Common myeloid progenitor, CD34-positive (primary cell): ENCODE measurements at regions of chr2 and their contacts with region 1.

Region 1: GRCh38 chr2:25309402-25309801 is 32.3 kb downstream of the DNMT3A start:
- DNase-seq: peak; percentile 77 to 90 (median 88)
- H3K4me3 ChIP-seq: no peak overlapping the region
- H3K27ac ChIP-seq: no peak overlapping the region
- H3K4me1 ChIP-seq: peaks cover 0 to 15% (median 7%) of the 10 kb centered on the region in 4 experiments
- H3K27me3 ChIP-seq: no peaks in the 10 kb centered on the region

Region 2: DNA sequence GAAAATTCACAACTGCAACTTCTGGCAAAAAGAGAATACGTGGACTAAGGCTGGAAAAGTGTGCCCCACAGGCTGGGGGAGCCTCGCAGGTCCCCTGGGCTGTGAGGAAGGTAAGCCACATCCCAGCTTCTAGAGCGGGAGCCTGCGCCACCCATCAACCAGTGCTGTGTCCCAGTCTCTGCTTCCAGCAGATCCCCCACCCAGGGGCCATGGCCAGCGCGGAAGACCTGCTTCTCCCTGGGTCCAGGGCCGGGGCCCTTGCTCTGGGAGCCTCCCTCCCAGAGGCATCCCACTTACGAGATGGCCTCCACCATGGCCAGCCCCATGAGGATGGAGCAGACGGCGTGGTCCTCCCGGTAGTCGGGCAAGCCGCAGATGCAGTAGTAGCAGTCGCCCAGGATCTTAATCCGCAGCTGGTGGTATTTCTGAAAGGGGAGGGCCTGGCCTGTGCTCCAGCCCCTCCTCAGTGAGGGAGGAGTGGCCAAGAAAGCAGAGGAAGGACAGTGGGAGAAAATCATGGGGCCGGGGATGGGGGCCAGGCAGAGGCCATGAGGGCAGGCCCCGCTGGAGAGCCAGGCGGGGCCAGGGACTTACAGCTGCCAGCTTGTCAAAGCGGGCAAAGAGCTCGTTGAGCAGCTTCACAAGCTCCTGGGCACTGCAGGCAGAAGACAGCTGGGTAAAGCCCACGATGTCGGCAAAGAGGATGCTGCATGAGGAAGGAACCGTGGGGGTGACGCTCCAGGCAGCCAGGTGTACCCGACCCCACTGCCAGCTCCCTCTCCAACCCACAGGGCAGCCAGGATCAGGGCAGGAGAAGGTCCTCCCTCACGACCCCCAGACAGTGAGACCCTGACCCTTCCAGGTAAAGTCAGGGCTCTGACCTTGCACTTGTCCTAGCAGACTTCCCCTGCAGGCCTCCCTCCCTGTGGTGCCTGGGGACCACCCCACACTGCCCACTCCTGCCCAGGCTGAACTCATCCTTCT is 468.1 kb before region 1 on chr2:
- CTCF ChIA-PET with region 1: no interaction called
- POLR2A ChIA-PET with region 1: no interaction called
- DNase-seq: no peak
- H3K4me3 ChIP-seq: no peak overlapping the region
- H3K27ac ChIP-seq: no peak overlapping the region
- H3K4me1 ChIP-seq: no peaks in the 10 kb centered on the region
- H3K27me3 ChIP-seq: no peaks in the 10 kb centered on the region

Region 3: DNA sequence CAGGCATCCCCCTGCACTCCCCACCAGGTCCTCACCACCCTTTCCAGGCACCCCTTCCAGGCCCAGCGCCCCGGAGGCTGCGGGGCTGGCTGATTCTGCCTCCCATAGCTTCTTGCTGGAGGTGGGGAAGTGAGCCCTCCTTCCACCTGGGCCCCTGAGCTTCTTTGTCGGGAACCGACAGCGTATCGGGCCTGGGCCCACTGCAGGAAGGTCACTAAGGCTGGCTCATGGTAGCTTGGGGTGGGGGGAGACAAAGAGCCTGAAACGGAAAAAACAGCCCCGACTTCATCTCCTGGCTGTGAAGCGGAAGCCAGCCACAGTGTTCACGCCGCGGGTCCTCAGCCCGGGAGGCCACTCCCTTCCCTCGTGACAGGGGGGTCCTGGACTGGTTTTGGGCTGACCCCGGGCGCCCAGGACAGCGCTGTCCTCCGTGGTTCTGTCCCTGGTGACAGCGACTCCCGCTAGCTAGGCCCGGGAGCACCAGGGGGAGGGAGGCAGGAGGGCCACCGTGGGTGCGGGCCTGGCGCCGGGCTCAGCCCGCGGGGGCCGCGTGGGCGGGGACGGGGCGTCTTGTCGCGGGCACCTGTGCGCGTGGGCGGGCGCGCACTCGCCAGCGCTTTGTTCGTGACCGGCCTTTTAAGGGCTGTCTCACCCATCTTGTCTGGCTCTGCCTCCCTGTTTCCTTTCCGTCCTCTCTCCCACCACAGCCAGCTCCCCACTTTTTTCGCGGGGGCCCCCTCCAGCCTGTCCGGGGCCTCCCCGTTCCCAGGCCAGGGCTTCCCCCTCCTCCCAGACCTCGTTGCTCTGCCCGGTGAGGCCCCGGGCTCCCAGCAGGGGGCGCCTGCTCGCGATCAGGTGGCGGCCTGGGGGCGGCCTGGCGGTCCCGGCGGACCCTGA is 32.6 kb before region 1 on chr2:
- CTCF ChIA-PET with region 1: interaction called, 41 read pairs
- POLR2A ChIA-PET with region 1: no interaction called
- DNase-seq: peak; percentile 71 to 86 (median 82)
- H3K4me3 ChIP-seq: peak overlapping the region in 5 of 7 experiments; percentile 6 to 58 (median 56)
- H3K27ac ChIP-seq: peak overlapping the region; percentile 75 to 83
- H3K4me1 ChIP-seq: peaks cover 22 to 79% (median 75%) of the 10 kb centered on the region in 4 experiments
- H3K27me3 ChIP-seq: no peaks in the 10 kb centered on the region

Region 4: DNA sequence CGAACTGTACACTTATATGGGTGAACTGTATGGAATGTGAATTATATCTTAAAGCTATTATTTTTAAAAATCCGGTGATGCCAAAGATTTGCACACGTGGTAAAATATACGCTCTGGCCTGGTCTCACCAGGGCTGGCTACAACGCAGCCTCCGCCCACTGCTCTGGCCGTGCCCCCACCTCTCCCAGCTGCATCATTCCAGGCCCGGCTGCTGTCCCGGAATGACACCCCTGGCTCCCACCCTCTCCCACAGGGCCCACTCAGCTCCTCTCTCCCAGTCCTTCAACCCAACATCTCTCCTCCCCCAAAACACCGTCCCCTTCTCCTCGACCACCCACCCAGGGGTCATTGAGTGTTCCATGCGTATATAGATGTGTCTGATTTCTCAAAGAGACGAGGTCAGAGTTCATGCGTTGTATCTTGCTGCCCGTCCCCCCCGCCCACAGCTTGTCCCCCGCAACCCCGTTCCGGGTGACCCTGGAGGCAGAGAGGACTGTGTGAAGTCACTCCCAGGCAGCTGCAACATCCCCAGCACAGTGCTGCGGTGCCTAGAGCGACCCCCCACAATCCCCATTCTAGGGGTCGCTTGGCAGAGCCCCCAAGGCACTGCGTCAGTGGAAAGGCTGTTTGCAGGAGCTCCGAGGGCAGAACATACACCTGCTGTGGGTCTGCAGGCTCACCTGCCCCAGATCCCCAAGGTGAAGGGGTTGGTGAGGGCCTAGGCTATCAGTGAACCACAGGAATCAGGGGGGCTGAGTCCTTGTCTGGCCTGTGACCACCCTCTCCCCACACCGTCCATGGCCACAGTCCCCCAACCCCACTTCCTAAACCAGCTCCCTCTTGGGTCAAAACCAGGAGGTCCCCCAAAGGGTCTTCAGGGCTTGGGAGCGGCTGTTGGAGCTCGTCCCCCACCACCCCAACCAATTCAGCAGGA is 19.0 kb after region 1 on chr2:
- CTCF ChIA-PET with region 1: interaction called, 12 read pairs
- POLR2A ChIA-PET with region 1: no interaction called
- DNase-seq: no peak
- H3K4me3 ChIP-seq: no peak overlapping the region
- H3K27ac ChIP-seq: no peak overlapping the region
- H3K4me1 ChIP-seq: no peaks in the 10 kb centered on the region
- H3K27me3 ChIP-seq: no peaks in the 10 kb centered on the region

Region 5: DNA sequence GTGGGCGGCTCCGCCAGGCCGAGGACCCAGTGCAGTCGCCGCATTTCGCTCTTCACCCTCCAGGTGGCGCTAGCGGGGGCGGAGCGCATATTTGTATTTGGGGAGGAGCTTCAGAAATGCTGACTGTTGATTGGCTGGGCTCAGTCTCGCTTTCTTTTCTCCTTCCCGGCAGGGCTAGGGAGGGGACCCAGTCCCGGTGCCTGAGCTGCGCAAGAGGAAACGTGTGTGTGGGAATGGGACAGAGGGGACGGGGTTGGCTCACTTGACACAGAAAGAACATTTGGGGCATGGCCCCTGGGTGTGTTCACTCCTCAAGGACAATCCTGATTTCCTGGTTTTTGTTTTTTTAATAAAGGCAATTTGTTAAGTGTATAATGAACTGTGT is 52.6 kb after region 1 on chr2:
- CTCF ChIA-PET with region 1: interaction called, 13 read pairs
- POLR2A ChIA-PET with region 1: no interaction called
- DNase-seq: peak; percentile 91 to 95 (median 92)
- H3K4me3 ChIP-seq: peak overlapping the region; percentile 37 to 90 (median 77)
- H3K27ac ChIP-seq: peak overlapping the region; percentile 27 to 75
- H3K4me1 ChIP-seq: peaks cover 0 to 14% (median 10%) of the 10 kb centered on the region in 4 experiments
- H3K27me3 ChIP-seq: no peaks in the 10 kb centered on the region